ENCODE measurements at regions of chr2 and their contacts with region 1.

Region 1: GRCh38 chr2:118209727-118210126 is 121.5 kb downstream of the INSIG2 start:
- DNase-seq: no peak
- H3K4me3 ChIP-seq: no peak overlapping the region
- H3K27ac ChIP-seq: no peak overlapping the region
- H3K27me3 ChIP-seq: no peaks in the 10 kb centered on the region
- CTCF ChIP-seq: no peak

Region 2: DNA sequence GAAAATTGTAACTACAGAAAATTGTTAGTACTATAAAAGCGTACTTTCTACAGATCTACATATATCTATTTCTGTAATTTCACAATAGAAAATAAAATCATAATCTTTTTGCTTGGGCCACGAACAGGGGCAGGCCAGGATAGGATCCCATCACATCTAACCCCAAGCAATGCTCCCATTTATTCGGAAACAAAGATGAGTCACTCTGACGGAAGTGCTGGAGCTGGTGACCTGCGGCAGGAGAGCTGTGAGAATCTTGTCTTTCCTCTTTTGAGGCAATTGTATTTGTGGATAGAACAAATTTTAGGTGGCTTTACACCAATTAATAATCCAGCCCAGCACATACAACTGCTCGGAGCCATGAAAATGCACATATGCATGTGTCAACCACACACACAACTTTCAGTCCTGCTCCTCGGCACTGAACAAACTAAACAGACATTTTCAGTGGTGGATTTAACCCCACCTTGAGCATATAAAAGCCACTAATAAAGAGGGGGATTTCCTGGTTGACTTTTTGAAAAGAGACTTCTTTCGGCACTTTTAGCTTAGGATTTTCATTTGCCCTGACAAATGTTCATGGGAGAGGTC is 143.7 kb before region 1 on chr2:
- CTCF ChIA-PET with region 1: no interaction called
- POLR2A ChIA-PET with region 1: no interaction called
- DNase-seq: no peak
- H3K4me3 ChIP-seq: no peak overlapping the region
- H3K27ac ChIP-seq: no peak overlapping the region
- H3K27me3 ChIP-seq: no peaks in the 10 kb centered on the region
- CTCF ChIP-seq: no peak

Region 3: GRCh38 chr2:118221666-118222594 is 12.2 kb after region 1 on chr2:
- CTCF ChIA-PET with region 1: interaction called, 10 read pairs
- POLR2A ChIA-PET with region 1: no interaction called
- DNase-seq: peak; percentile 36
- H3K4me3 ChIP-seq: no peak overlapping the region
- H3K27ac ChIP-seq: no peak overlapping the region
- H3K27me3 ChIP-seq: peaks cover 44% of the 10 kb centered on the region
- CTCF ChIP-seq: peak; percentile 75

Region 4: DNA sequence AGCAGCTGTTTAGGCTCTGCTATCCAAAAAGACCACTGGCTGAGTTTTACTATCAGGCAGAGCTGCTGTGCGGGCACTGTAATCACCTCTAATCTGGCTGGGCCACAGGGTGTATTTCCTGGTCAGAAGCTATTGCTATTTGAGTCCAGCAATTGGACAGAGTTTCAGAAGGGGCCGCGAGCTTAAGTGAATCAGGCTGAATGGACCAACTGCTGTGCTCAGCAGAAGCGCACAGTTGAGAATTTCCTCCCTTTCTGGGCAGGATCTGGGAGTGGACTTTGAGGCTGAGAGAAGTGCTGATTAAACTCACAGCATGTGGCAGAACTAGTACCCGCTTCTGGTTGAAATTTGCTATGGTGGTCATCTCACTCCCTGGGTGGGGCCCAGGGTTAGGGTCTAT is 130.4 kb after region 1 on chr2:
- CTCF ChIA-PET with region 1: no interaction called
- POLR2A ChIA-PET with region 1: no interaction called
- DNase-seq: no peak
- H3K4me3 ChIP-seq: no peak overlapping the region
- H3K27ac ChIP-seq: no peak overlapping the region
- H3K27me3 ChIP-seq: no peaks in the 10 kb centered on the region
- CTCF ChIP-seq: no peak

Measured in AG04450 (cell line).